ENCODE measurements at regions of chr2 and their contacts with region 1.

Region 1: GRCh38 chr2:234550511-234551107 is 53.7 kb upstream of the ARL4C start:
- DNase-seq: peak; percentile 82
- ATAC-seq: peak; percentile 81
- H3K4me3 ChIP-seq: no peak overlapping the region
- H3K4me3 Mint-ChIP-seq: no peak overlapping the region
- H3K27ac ChIP-seq: no peak overlapping the region
- H3K27ac Mint-ChIP-seq: no peak overlapping the region
- H3K4me1 ChIP-seq: peaks cover 7 to 10% of the 10 kb centered on the region in 2 donors
- H3K4me1 Mint-ChIP-seq: peaks cover 11% of the 10 kb centered on the region
- H3K27me3 ChIP-seq: peaks cover 0 to 9% (median 7%) of the 10 kb centered on the region in 4 experiments
- H3K27me3 Mint-ChIP-seq: peaks cover 41% of the 10 kb centered on the region
- CTCF ChIP-seq: peak; percentile 98

Region 2: GRCh38 chr2:233901367-233901766 is 649.2 kb before region 1 on chr2:
- CTCF ChIA-PET with region 1: no interaction called
- POLR2A ChIA-PET with region 1: no interaction called
- intact Hi-C with region 1: no loop called
- DNase-seq: no peak
- ATAC-seq: no peak
- H3K4me3 ChIP-seq: no peak overlapping the region
- H3K4me3 Mint-ChIP-seq: no peak overlapping the region
- H3K27ac ChIP-seq: no peak overlapping the region
- H3K27ac Mint-ChIP-seq: no peak overlapping the region
- H3K4me1 ChIP-seq: no peaks in the 10 kb centered on the region
- H3K4me1 Mint-ChIP-seq: no peaks in the 10 kb centered on the region
- H3K27me3 ChIP-seq: peaks cover 0 to 13% (median 6%) of the 10 kb centered on the region in 4 experiments
- H3K27me3 Mint-ChIP-seq: peaks cover 41% of the 10 kb centered on the region
- CTCF ChIP-seq: no peak

Region 3: GRCh38 chr2:234603619-234604018 is 53.0 kb after region 1 on chr2:
- CTCF ChIA-PET with region 1: interaction called, 4 read pairs
- POLR2A ChIA-PET with region 1: no interaction called
- intact Hi-C with region 1: loop called (anchors 1 kb)
- DNase-seq: no peak
- ATAC-seq: no peak
- H3K4me3 ChIP-seq: no peak overlapping the region
- H3K4me3 Mint-ChIP-seq: no peak overlapping the region
- H3K27ac ChIP-seq: no peak overlapping the region
- H3K27ac Mint-ChIP-seq: no peak overlapping the region
- H3K4me1 ChIP-seq: no peaks in the 10 kb centered on the region
- H3K4me1 Mint-ChIP-seq: no peaks in the 10 kb centered on the region
- H3K27me3 ChIP-seq: peaks cover 0 to 4% (median 0%) of the 10 kb centered on the region in 4 experiments
- H3K27me3 Mint-ChIP-seq: peaks cover 6% of the 10 kb centered on the region
- CTCF ChIP-seq: no peak

Region 4: DNA sequence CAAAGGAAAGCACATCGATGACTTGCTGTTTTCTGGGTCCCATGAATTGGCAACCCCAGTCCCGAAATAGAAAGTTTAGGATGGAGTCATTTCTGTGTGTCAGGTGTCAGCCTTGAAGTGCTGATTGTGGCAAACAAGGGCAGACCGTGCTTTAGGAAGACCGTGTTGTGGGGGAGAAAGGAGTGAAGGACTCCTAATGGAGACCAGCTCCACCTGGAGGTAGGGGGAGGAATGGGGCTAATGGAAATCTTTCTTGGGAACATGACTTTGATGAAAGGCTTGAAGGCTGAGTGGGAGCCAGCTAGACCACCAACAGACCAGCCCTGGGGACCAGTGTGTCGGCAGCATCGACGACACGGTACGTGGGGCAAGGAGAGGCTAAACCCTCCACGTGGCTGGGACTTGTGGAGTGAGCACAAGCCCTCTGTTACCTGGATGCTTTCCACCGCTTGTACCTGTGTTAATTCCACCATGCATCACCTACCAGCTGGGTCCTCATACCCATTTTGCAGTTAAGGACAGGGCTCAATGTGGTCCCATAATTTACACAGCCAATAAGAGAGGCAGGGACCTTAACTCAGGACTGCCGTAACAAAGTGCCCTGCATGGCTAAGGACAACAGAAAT is 505.4 kb after region 1 on chr2:
- CTCF ChIA-PET with region 1: interaction called, 4 read pairs
- POLR2A ChIA-PET with region 1: no interaction called
- intact Hi-C with region 1: loop called (anchors 2 kb)
- DNase-seq: peak; percentile 51
- ATAC-seq: no peak
- H3K4me3 ChIP-seq: no peak overlapping the region
- H3K4me3 Mint-ChIP-seq: no peak overlapping the region
- H3K27ac ChIP-seq: no peak overlapping the region
- H3K27ac Mint-ChIP-seq: no peak overlapping the region
- H3K4me1 ChIP-seq: peaks cover 0 to 5% of the 10 kb centered on the region in 2 donors
- H3K4me1 Mint-ChIP-seq: peaks cover 18% of the 10 kb centered on the region
- H3K27me3 ChIP-seq: peaks cover 0 to 3% (median 0%) of the 10 kb centered on the region in 4 experiments
- H3K27me3 Mint-ChIP-seq: peaks cover 30% of the 10 kb centered on the region
- CTCF ChIP-seq: peak; percentile 11

Region 5: GRCh38 chr2:235106874-235107639 is 556.4 kb after region 1 on chr2:
- CTCF ChIA-PET with region 1: interaction called, 18 read pairs
- POLR2A ChIA-PET with region 1: no interaction called
- intact Hi-C with region 1: loop called (anchors 1 kb)
- DNase-seq: peak; percentile 53
- ATAC-seq: no peak
- H3K4me3 ChIP-seq: no peak overlapping the region
- H3K4me3 Mint-ChIP-seq: no peak overlapping the region
- H3K27ac ChIP-seq: no peak overlapping the region
- H3K27ac Mint-ChIP-seq: no peak overlapping the region
- H3K4me1 ChIP-seq: no peaks in the 10 kb centered on the region
- H3K4me1 Mint-ChIP-seq: no peaks in the 10 kb centered on the region
- H3K27me3 ChIP-seq: peaks cover 0 to 4% (median 0%) of the 10 kb centered on the region in 4 experiments
- H3K27me3 Mint-ChIP-seq: peaks cover 4% of the 10 kb centered on the region
- CTCF ChIP-seq: peak; percentile 46

Region 6: DNA sequence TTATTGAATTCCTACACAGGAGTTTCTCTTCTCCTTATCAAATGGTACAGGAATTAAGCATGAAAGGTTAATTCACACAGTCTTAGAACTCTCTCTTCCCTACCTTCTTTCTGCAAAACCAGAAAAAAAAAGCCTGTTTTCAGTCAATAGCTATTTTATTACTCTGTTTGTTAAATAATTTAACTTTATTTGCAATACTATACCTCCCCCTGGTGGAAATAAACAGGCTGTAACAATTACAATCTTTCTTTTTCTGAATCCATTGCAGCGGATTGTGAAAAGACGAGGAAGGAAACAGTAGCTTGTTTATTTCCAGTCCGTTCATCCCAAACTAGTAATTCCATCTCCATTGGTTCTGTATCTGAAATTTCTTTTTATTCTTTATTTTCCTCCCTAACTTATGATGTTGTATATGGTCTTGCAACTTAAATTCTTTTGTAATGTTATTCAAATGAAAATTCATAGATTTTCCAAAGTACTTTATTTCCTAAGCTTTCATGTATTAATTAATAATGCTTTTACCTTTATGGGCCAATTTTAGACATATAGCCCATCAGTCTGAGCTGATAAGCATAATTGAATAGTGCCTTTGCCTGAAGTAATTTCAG is 566.4 kb after region 1 on chr2:
- CTCF ChIA-PET with region 1: interaction called, 76 read pairs
- POLR2A ChIA-PET with region 1: no interaction called
- intact Hi-C with region 1: loop called (anchors 1 kb)
- DNase-seq: peak; percentile 54
- ATAC-seq: no peak
- H3K4me3 ChIP-seq: no peak overlapping the region
- H3K4me3 Mint-ChIP-seq: no peak overlapping the region
- H3K27ac ChIP-seq: no peak overlapping the region
- H3K27ac Mint-ChIP-seq: no peak overlapping the region
- H3K4me1 ChIP-seq: no peaks in the 10 kb centered on the region
- H3K4me1 Mint-ChIP-seq: no peaks in the 10 kb centered on the region
- H3K27me3 ChIP-seq: no peaks in the 10 kb centered on the region
- H3K27me3 Mint-ChIP-seq: peaks cover 4% of the 10 kb centered on the region
- CTCF ChIP-seq: peak; percentile 82